ENCODE measurements at regions of chr12 and their contacts with region 1.

Region 1: DNA sequence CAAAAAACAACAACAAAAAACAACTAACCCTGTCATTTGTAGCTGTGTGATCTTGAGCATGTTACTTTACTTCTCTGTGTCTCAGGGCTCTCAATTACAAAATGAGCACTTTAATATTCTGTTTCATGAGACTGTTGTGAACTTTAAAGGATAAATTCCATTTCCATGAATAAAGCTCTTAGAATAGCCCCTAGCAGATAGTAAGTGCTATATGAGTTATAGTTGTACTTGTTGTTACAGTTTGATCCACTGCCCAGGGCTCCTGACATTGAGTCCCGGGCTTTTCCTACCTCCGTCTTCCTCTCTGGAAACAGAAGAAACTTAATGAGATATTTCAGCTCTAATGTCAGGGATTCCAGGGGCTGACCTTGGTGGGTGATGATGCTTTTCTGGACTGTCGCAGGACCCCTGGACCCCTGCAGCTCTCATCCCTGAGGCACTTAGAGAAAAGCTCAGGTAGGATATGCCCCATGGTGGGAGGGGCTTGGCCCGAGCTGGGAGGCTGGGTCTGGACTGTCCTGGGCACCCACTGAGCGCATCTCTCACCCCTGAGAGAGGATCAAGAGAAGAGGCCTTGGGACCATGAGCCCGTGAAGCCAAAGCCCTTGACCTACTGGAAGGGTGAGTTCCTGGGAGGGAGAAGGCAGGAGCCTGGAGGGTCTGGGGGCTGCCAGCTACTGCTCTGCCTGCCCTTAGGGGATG is 5.1 kb downstream of the P3H3 start:
- DNase-seq: no peak
- H3K4me3 Mint-ChIP-seq: no peak overlapping the region
- H3K27ac Mint-ChIP-seq: no peak overlapping the region
- H3K4me1 Mint-ChIP-seq: peaks cover 12% of the 10 kb centered on the region
- H3K27me3 Mint-ChIP-seq: peaks cover 50% of the 10 kb centered on the region

Region 2: GRCh38 chr12:6451348-6452244 is 381.7 kb before region 1 on chr12 and contains the start of gene TAPBPL:
- CTCF ChIA-PET with region 1: no interaction called
- DNase-seq: peak; percentile 90
- H3K4me3 Mint-ChIP-seq: peak within 1 kb of the TSS; percentile 99
- H3K27ac Mint-ChIP-seq: peak within 1 kb of the TSS; percentile 99
- H3K4me1 Mint-ChIP-seq: peaks cover 82% of the 10 kb centered on the region
- H3K27me3 Mint-ChIP-seq: no peaks in the 10 kb centered on the region

Region 3: GRCh38 chr12:6851921-6852650 is 18.7 kb after region 1 on chr12 and contains the start of gene USP5:
- CTCF ChIA-PET with region 1: interaction called, 38 read pairs
- DNase-seq: peak; percentile 99
- H3K4me3 Mint-ChIP-seq: peak within 1 kb of the TSS; percentile 84
- H3K27ac Mint-ChIP-seq: peak within 1 kb of the TSS; percentile 100
- H3K4me1 Mint-ChIP-seq: peaks cover 55% of the 10 kb centered on the region
- H3K27me3 Mint-ChIP-seq: no peaks in the 10 kb centered on the region